HepG2 (cell line): ENCODE measurements at regions of chr20 and their contacts with region 1.

Region 1: DNA sequence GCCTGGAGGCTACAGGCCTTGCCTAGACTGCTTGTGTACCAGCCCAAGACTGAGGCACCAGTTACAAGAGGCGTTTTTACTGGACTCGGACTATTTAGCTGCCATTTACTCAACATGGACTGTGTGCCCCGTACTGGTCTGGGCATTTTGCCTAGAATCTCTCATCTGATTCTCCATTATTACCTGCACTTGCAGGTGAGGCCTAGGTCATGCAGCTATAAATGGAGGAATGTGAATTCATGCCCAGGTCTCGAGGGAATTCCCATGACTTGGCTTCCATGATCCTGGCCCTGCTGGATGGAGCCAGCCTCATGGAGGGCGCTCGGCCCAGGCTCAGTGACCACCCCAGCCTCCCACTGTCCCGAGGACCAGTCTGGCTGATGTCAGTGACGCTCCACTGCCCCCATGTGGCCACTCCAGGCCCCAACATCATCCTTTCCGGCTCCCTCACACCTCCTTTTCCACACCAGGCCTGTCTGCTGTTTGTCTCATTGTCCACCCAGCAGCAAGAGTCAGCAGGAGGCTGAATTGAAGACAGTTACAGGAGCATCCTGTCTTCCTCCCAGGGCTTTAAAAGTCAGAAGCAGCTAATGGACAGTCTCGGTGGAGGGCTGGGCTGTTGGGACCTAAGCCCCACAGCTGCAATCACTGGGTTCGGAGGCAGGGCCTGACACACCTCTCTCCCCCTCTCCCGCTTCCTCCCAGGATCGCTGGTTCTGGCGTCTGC is 8.7 kb downstream of the MMP24OS start:
- DNase-seq: peak; percentile 77
- ATAC-seq: peak; percentile 82
- H3K4me3 ChIP-seq: peak overlapping the region in 1 of 3 experiments; percentile 35; a peak in 2 of 6 replicates
- H3K27ac ChIP-seq: no peak overlapping the region
- H3K4me1 ChIP-seq: peaks cover 19% of the 10 kb centered on the region
- H3K27me3 ChIP-seq: no peaks in the 10 kb centered on the region
- CTCF ChIP-seq: peak; percentile 100
- EP300 ChIP-seq: peak in 1 of 2 experiments; percentile 69; a peak in 1 of 4 replicates
- POLR2A ChIP-seq: no peak
- RAD21 ChIP-seq: peak; percentile 98

Region 2: GRCh38 chr20:34834459-34834893 is 434.7 kb before region 1 on chr20:
- CTCF ChIA-PET with region 1: interaction called, 8 read pairs
- POLR2A ChIA-PET with region 1: no interaction called
- in situ Hi-C with region 1: no loop called
- intact Hi-C with region 1: loop called (anchors 1 kb)
- DNase-seq: peak; percentile 47
- ATAC-seq: peak; percentile 62
- H3K4me3 ChIP-seq: peak overlapping the region in 1 of 3 experiments; percentile 1; a peak in 1 of 6 replicates
- H3K27ac ChIP-seq: no peak overlapping the region
- H3K4me1 ChIP-seq: peaks cover 6% of the 10 kb centered on the region
- H3K27me3 ChIP-seq: no peaks in the 10 kb centered on the region
- CTCF ChIP-seq: peak; percentile 65
- EP300 ChIP-seq: no peak
- POLR2A ChIP-seq: no peak
- RAD21 ChIP-seq: peak; percentile 61; the same call in 1 of the 2 replicates

Region 3: DNA sequence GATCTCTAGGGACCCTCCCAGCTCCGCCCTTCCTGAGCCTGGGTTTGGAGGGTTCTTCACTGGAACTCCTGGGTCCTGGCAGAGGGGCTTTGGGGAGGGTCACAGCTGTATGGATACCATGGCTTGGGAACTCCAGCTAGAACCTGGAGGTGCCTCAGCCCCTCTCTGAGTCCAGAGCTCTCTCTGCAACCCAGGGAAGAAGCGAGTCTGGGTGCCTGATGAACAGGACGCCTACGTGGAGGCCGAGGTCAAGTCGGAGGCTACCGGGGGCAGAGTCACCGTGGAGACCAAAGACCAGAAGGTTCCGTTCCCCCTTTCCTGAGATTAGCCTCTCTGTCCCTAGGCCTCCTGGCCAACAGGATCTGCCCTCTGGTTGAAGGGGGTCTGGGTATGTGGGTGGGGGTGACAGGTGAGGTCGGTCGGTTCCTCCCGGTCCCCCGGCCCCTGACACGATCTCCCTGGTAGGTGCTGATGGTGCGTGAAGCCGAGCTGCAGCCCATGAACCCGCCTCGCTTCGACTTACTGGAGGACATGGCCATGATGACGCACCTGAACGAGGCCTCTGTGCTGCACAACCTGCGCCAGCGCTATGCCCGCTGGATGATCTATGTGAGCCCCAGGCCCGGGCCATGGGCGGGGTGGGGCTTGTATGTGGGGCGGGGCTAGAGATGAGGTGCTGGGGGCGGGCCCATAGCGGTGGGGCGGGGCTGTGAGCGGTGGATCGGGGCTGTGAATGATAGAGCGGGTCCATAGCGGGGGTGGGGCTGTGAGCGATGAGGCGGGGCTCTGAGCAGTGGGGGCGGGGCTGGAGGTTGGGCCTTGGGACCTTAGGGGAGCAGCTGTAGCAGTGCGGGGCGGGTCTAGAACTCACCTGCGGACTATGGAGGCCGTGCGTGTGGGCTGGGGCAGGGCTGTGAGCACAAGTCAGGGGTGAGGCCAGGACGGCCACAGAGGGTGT is 289.7 kb before region 1 on chr20:
- CTCF ChIA-PET with region 1: no interaction called
- POLR2A ChIA-PET with region 1: no interaction called
- in situ Hi-C with region 1: no loop called
- intact Hi-C with region 1: loop called (anchors 5 kb)
- DNase-seq: no peak
- ATAC-seq: no peak
- H3K4me3 ChIP-seq: no peak overlapping the region
- H3K27ac ChIP-seq: no peak overlapping the region
- H3K4me1 ChIP-seq: peaks cover 27% of the 10 kb centered on the region
- H3K27me3 ChIP-seq: peaks cover 13 to 16% of the 10 kb centered on the region in 2 experiments
- CTCF ChIP-seq: no peak
- EP300 ChIP-seq: no peak
- POLR2A ChIP-seq: no peak
- RAD21 ChIP-seq: no peak

Region 4: DNA sequence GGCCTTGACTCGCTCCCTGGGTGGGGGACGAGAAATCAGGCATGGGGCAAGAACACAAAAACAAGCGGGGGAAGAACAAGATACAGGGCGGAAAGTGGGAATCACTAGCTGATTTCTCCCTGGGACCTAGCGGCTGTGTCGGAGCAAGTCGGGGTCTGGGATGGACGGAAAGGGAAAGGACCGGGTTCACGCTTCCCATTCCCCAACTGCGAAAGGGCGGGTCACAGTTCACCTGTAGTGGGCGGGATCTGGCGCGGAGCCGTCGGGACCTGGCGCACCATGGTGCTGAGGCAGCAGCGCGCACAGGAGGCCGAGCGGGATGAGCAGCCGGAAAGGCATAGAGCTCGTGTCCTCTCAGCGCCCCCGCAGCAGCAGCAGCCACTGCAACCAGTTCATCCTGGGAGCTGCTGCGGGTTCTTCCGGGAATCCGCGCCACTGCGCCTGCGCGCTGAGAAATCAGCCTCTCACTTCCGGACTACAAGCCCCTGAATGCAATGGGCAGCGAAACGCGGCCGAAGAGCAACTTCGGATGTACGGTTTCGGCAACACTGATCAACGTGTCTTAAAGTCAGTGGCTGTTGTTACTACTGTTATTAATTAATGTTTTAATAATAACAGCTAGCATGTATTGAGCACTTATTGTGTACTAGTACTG is 122.2 kb before region 1 on chr20 and contains the start of gene EDEM2:
- CTCF ChIA-PET with region 1: interaction called, 27 read pairs
- POLR2A ChIA-PET with region 1: interaction called, 26 read pairs
- in situ Hi-C with region 1: loop called (anchors 5 kb)
- intact Hi-C with region 1: loop called (anchors 1 kb)
- DNase-seq: peak; percentile 98
- ATAC-seq: peak; percentile 96
- H3K4me3 ChIP-seq: peak within 1 kb of the TSS; percentile 78 to 92 (median 91)
- H3K27ac ChIP-seq: peak within 1 kb of the TSS; percentile 71
- H3K4me1 ChIP-seq: peaks cover 36% of the 10 kb centered on the region
- H3K27me3 ChIP-seq: no peaks in the 10 kb centered on the region; a peak in 1 of 5 replicates
- CTCF ChIP-seq: peak; percentile 81
- EP300 ChIP-seq: peak in 1 of 2 experiments; percentile 32; a peak in 1 of 4 replicates
- POLR2A ChIP-seq: peak; percentile 83 to 90; a peak in 3 of 4 replicates
- RAD21 ChIP-seq: peak; percentile 61; the same call in 1 of the 2 replicates
- total RNA-seq, gene EDEM2: 26.1 and 46.9 TPM in 2 replicates

Region 5: DNA sequence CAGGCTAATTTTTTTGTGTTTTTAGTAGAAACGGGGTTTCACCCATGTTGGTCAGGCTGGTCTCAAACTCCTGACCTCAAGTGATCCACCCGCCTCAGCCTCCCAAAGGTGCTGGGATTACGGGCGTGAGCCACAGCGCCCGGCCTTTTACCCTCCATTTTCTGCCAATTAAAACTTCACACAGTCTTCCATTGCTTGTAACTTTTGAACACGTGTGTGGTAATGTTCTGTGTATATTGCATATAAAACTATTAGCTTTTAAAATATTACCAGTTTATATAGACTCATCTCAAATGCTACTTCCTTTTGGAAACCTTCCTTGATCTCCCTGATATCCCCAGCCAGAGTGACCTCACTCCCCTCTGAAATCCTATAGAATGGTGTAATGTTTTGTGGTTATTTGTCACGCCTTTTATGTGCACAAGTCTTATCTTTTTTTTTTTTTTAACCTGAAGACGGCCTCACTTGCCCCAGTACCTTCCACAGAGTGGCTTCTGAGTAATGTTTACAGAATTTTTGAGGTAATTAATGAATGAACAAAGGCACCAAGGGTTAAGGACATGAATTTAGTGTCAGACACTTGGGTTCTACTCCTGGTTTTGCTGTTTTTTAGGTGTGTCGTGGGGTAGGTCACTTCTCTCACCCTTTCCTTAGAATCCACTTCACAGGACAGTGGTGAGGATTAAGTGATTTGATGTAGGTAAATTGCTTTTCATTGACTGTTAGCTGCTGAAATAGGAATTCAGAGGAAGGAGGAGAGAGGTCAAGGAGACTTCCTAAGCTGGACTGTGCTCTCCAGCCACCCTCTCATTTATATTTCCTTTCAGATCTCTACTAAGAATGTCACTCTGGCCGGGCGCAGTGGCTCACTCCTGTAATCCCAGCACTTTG is 53.9 kb before region 1 on chr20:
- CTCF ChIA-PET with region 1: no interaction called
- POLR2A ChIA-PET with region 1: interaction called, 3 read pairs
- in situ Hi-C with region 1: loop called (anchors 5 kb)
- intact Hi-C with region 1: no loop called
- DNase-seq: peak; percentile 61
- ATAC-seq: no peak
- H3K4me3 ChIP-seq: no peak overlapping the region
- H3K27ac ChIP-seq: no peak overlapping the region
- H3K4me1 ChIP-seq: 0 out of 2 replicates have a peak, but pooled peaks cover 9% of the 10 kb centered on the region
- H3K27me3 ChIP-seq: peaks cover 0 to 1% of the 10 kb centered on the region in 2 experiments; a peak in 1 of 5 replicates
- CTCF ChIP-seq: no peak
- EP300 ChIP-seq: no peak
- POLR2A ChIP-seq: no peak
- RAD21 ChIP-seq: no peak

Region 6: DNA sequence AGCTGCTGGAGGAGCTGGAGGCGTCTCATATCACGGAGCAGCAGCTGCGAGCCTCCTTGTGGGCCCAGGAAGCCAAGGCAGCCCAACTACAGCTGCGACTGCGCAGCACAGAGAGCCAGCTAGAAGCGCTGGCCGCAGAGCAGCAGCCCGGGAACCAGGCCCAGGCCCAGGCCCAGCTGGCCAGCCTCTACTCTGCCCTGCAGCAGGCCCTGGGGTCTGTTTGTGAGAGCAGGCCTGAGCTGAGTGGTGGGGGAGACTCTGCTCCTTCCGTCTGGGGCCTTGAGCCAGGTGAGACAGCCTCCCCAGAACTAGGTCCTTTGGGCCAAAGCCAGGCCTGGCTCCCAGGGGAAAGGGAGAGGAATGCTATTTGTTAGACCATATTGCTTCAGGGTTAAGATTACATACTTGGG is 228.6 kb after region 1 on chr20:
- CTCF ChIA-PET with region 1: no interaction called
- POLR2A ChIA-PET with region 1: no interaction called
- in situ Hi-C with region 1: no loop called
- intact Hi-C with region 1: no loop called
- DNase-seq: no peak
- ATAC-seq: no peak
- H3K4me3 ChIP-seq: no peak overlapping the region
- H3K27ac ChIP-seq: no peak overlapping the region
- H3K4me1 ChIP-seq: no peaks in the 10 kb centered on the region
- H3K27me3 ChIP-seq: no peaks in the 10 kb centered on the region
- CTCF ChIP-seq: no peak
- EP300 ChIP-seq: no peak
- POLR2A ChIP-seq: no peak
- RAD21 ChIP-seq: no peak